ENCODE measurements at regions of chr16 and their contacts with region 1.

Region 1: DNA sequence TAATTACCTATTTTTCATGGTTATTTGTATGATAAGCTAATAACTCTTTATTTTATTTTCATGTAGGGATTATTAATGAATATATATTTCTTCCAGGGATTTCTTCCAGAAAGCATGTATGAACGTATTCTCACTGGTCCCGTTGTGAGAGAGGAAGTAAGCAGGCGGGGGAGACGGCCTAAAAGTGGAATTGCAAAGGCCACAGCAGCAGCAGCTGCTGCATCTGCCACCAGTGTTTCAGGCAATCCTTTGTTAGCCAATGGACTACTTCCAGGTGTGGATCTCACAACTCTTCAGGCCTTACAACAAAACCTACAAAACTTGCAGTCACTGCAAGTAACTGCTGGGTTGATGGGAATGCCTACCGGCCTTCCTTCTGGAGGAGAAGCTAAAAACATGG is 110.3 kb upstream of the RBL2 start:
- DNase-seq: no peak
- H3K4me3 ChIP-seq: no peak overlapping the region
- H3K27ac ChIP-seq: no peak overlapping the region
- H3K4me1 ChIP-seq: no peaks in the 10 kb centered on the region
- H3K27me3 ChIP-seq: no peaks in the 10 kb centered on the region
- CTCF ChIP-seq: no peak
- POLR2A ChIP-seq: no peak

Region 2: GRCh38 chr16:54489225-54490111 is 1165.5 kb after region 1 on chr16:
- intact Hi-C with region 1: loop called (anchors 10 kb)
- DNase-seq: no peak
- H3K4me3 ChIP-seq: no peak overlapping the region
- H3K27ac ChIP-seq: no peak overlapping the region
- H3K4me1 ChIP-seq: no peaks in the 10 kb centered on the region
- H3K27me3 ChIP-seq: no peaks in the 10 kb centered on the region
- CTCF ChIP-seq: no peak
- POLR2A ChIP-seq: no peak

Region 3: DNA sequence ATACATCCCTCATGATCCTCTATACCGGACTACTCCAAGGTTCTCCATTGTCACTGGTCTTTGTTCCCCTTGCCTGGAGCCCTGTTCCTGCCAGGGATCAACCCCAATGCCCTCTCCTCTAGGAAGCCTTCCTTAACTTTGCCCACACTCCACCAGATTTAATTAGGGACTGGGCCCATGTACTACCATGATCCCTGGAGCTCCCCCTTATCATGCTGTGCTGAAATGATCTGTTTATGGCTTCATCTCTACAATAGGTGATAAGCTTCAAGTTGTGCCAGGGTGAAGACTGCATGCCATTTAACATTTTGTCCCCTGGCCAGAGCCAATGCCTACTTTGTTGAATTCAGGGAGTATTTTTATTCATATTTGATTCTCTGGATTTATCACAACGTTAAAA is 1588.8 kb after region 1 on chr16:
- intact Hi-C with region 1: loop called (anchors 5 kb)
- DNase-seq: no peak
- H3K4me3 ChIP-seq: no peak overlapping the region
- H3K27ac ChIP-seq: no peak overlapping the region
- H3K4me1 ChIP-seq: no peaks in the 10 kb centered on the region
- H3K27me3 ChIP-seq: no peaks in the 10 kb centered on the region
- CTCF ChIP-seq: no peak
- POLR2A ChIP-seq: no peak

Measured in breast epithelium (tissue), 4 donors.